IMR-90 (cell line): ENCODE measurements at regions of chr7 and their contacts with region 1.

Region 1: GRCh38 chr7:20598459-20599309 is 16.8 kb upstream of the ABCB5 start:
- DNase-seq: peak; percentile 71
- ATAC-seq: peak; percentile 84
- H3K4me3 ChIP-seq: no peak overlapping the region
- H3K27ac ChIP-seq: no peak overlapping the region
- H3K4me1 ChIP-seq: no peaks in the 10 kb centered on the region
- H3K27me3 ChIP-seq: no peaks in the 10 kb centered on the region
- CTCF ChIP-seq: peak; percentile 88
- POLR2A ChIP-seq: no peak
- RAD21 ChIP-seq: peak; percentile 95

Region 2: DNA sequence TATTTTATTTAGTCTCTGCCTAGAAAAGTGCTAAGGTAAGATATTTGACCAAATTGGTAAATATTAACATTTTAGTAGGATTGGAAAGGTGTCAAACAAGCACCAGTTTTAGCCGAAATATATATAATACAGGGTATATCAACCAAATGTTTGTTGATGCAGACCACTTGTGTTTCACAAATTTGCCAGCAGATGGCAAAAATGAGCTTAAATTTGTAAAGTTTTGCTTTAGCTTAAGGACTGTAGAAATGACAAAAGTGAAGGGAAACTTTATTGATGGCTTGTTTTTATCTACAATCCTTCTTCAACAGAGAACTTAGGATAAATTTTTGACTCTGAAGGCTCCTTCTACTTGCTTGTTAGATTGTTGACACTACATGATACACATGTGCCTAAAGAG is 885.0 kb before region 1 on chr7:
- CTCF ChIA-PET with region 1: interaction called, 32 read pairs
- POLR2A ChIA-PET with region 1: no interaction called
- dilution Hi-C with region 1: no loop called
- in situ Hi-C with region 1: loop called (anchors 10 kb)
- intact Hi-C with region 1: loop called (anchors 1 kb)
- DNase-seq: peak; percentile 45
- ATAC-seq: peak; percentile 35; the same call in 1 of the 2 replicates
- H3K4me3 ChIP-seq: no peak overlapping the region
- H3K27ac ChIP-seq: no peak overlapping the region
- H3K4me1 ChIP-seq: no peaks in the 10 kb centered on the region
- H3K27me3 ChIP-seq: no peaks in the 10 kb centered on the region
- CTCF ChIP-seq: peak; percentile 58
- POLR2A ChIP-seq: no peak
- RAD21 ChIP-seq: peak; percentile 48

Region 3: DNA sequence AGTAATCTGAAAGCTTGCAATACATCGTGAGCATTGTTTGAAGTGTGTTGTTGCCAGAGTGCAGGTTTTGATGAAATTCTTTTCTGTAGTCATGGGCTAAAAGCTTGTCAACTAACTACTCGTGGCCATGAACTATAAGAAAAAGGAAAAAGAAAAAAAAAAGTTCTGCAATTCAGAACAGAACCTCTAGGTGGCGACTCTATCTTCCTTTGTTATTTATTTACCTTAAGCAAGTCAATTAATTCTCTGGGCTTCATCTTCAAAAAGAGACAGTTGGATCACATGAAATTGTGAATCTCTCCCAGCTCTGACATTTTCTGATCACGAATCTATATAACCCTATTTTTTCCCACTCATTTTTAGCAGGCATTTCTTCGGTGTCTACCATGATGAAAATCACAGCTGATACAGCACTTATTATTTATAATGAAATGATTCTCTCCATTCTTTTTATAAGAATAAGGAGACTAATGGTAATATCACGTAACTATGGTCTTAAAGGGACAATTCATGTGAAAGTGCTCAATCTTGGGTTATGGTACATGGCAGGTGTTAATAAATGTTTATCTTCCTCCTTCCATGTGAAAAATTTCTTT is 844.1 kb before region 1 on chr7:
- CTCF ChIA-PET with region 1: interaction called, 5 read pairs
- POLR2A ChIA-PET with region 1: no interaction called
- dilution Hi-C with region 1: loop called (anchors 25 kb)
- in situ Hi-C with region 1: loop called (anchors 5 kb)
- intact Hi-C with region 1: no loop called
- DNase-seq: peak; percentile 12
- ATAC-seq: no peak
- H3K4me3 ChIP-seq: no peak overlapping the region
- H3K27ac ChIP-seq: no peak overlapping the region
- H3K4me1 ChIP-seq: no peaks in the 10 kb centered on the region
- H3K27me3 ChIP-seq: no peaks in the 10 kb centered on the region
- CTCF ChIP-seq: peak; percentile 62
- POLR2A ChIP-seq: no peak
- RAD21 ChIP-seq: peak; percentile 57

Region 4: DNA sequence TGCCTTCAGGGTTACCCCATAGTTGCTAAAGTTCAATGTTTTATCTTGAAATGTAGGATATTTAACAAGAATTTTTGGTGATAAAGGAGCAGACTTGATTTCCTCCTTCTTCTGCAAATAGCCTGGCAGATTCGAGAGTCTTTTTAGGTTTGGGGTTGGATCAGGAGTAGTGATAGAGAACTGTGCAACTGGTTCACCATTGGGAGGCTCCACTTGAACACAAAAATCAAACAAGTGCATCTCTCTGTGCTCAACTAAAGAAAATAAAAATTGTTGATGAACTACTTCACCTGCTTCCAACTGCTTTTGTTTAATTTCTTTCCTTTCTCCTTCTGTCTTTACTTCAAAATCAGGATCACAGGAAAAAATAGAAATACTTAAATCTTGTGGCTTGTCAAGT is 440.0 kb before region 1 on chr7:
- CTCF ChIA-PET with region 1: no interaction called
- POLR2A ChIA-PET with region 1: no interaction called
- dilution Hi-C with region 1: no loop called
- in situ Hi-C with region 1: loop called (anchors 25 kb)
- intact Hi-C with region 1: loop called (anchors 1 kb)
- DNase-seq: peak; percentile 36
- ATAC-seq: peak; percentile 42; the same call in 1 of the 2 replicates
- H3K4me3 ChIP-seq: no peak overlapping the region
- H3K27ac ChIP-seq: no peak overlapping the region
- H3K4me1 ChIP-seq: no peaks in the 10 kb centered on the region
- H3K27me3 ChIP-seq: no peaks in the 10 kb centered on the region
- CTCF ChIP-seq: peak; percentile 50
- POLR2A ChIP-seq: no peak
- RAD21 ChIP-seq: peak; percentile 52

Region 5: DNA sequence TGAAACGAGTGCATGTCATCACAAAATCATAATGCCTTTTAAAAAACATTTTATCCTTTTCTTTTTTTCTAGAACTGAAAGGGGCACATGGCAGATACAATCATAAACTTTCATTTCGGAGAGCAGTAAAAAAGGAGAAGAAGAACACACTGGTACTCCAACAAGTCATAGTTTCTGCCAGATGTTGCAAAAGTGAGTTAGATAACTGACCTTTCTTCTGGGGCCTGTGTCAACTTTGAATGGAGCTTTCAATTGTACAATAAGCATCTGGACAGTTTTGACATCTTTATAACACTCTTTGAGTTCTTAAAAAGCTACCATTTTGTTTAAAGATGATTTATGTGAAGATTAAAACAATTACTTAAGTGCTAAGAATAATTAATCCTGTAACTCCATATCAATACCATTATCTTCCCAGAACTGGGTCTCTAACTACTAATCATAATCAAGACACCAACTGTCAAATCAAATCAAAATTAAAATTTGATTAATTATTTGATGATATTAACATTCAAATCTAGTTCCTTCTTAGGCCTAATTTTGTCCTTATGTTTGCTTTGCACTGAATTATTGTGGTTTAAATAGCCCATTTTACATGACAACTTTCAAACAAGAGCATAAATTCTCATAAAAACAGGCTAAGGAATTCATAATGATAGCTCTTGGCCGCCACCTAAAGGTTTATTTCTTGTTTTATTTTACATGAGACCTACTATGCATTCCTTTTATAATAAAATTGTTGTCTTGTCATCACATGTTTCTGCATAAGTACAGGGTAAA is 287.5 kb before region 1 on chr7:
- CTCF ChIA-PET with region 1: interaction called, 3 read pairs
- POLR2A ChIA-PET with region 1: no interaction called
- dilution Hi-C with region 1: no loop called
- in situ Hi-C with region 1: no loop called
- intact Hi-C with region 1: loop called (anchors 5 kb)
- DNase-seq: peak; percentile 67
- ATAC-seq: peak; percentile 61
- H3K4me3 ChIP-seq: no peak overlapping the region
- H3K27ac ChIP-seq: no peak overlapping the region; the same call in 1 of the 2 replicates
- H3K4me1 ChIP-seq: peaks cover 3% of the 10 kb centered on the region
- H3K27me3 ChIP-seq: no peaks in the 10 kb centered on the region
- CTCF ChIP-seq: peak; percentile 58
- POLR2A ChIP-seq: no peak
- RAD21 ChIP-seq: peak; percentile 73

Region 6: GRCh38 chr7:20440472-20441105 is 158.1 kb before region 1 on chr7:
- CTCF ChIA-PET with region 1: no interaction called
- POLR2A ChIA-PET with region 1: no interaction called
- dilution Hi-C with region 1: no loop called
- in situ Hi-C with region 1: no loop called
- intact Hi-C with region 1: loop called (anchors 5 kb)
- DNase-seq: peak; percentile 62
- ATAC-seq: peak; percentile 37; the same call in 1 of the 2 replicates
- H3K4me3 ChIP-seq: no peak overlapping the region
- H3K27ac ChIP-seq: no peak overlapping the region
- H3K4me1 ChIP-seq: no peaks in the 10 kb centered on the region; the same call in 1 of the 2 replicates
- H3K27me3 ChIP-seq: no peaks in the 10 kb centered on the region; the same call in 1 of the 2 replicates
- CTCF ChIP-seq: peak; percentile 65
- POLR2A ChIP-seq: no peak
- RAD21 ChIP-seq: peak; percentile 59

Region 7: GRCh38 chr7:20560325-20561180 is 38.1 kb before region 1 on chr7:
- CTCF ChIA-PET with region 1: no interaction called
- POLR2A ChIA-PET with region 1: no interaction called
- dilution Hi-C with region 1: no loop called
- in situ Hi-C with region 1: no loop called
- intact Hi-C with region 1: no loop called
- DNase-seq: no peak
- ATAC-seq: no peak
- H3K4me3 ChIP-seq: no peak overlapping the region
- H3K27ac ChIP-seq: no peak overlapping the region
- H3K4me1 ChIP-seq: no peaks in the 10 kb centered on the region
- H3K27me3 ChIP-seq: no peaks in the 10 kb centered on the region
- CTCF ChIP-seq: no peak
- POLR2A ChIP-seq: no peak
- RAD21 ChIP-seq: no peak